GM12878 (cell line): ENCODE measurements at regions of chr12 and their contacts with region 1.

Region 1: DNA sequence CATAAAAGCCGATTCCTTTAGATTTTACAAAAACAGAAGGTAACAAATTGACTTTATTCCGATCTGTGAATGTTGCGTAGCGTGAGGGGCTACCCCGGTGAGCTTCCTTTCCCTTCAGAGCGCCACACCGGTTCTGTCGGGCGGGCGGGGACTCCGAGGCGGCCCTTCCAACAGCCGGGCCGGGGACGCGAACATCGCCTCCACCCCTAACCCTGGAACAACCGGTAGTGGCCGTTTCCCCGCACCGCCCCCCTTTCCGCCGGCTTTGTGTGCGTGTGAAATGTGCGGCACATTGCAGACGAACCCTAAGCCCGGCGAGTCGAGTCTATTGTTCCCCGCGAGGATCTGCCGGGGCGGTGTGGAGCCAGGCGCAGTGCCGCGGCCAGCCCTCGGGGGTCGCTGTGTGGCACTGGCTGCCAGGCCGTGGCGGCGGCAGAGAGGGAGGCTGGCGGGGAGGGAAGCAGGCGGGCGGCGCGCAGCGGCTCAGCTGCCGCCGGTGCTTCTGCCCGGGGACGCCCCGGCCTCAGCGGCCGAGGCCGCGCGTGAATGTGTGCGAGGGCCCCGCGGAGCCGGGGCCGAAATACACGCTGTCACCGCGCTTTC is 775 bp upstream of the ARID2 start:
- DNase-seq: peak; percentile 87
- ATAC-seq: peak; percentile 73
- H3K4me3 ChIP-seq: peak overlapping the region; percentile 93
- H3K27ac ChIP-seq: peak overlapping the region; percentile 95
- H3K4me1 ChIP-seq: no peaks in the 10 kb centered on the region
- H3K27me3 ChIP-seq: no peaks in the 10 kb centered on the region
- CTCF ChIP-seq: peak; percentile 94 to 98 (median 96)
- EP300 ChIP-seq: peak; percentile 36 to 45; a peak in 1 of 4 replicates
- POLR2A ChIP-seq: peak; percentile 96
- RAD21 ChIP-seq: peak; percentile 64

Region 2: DNA sequence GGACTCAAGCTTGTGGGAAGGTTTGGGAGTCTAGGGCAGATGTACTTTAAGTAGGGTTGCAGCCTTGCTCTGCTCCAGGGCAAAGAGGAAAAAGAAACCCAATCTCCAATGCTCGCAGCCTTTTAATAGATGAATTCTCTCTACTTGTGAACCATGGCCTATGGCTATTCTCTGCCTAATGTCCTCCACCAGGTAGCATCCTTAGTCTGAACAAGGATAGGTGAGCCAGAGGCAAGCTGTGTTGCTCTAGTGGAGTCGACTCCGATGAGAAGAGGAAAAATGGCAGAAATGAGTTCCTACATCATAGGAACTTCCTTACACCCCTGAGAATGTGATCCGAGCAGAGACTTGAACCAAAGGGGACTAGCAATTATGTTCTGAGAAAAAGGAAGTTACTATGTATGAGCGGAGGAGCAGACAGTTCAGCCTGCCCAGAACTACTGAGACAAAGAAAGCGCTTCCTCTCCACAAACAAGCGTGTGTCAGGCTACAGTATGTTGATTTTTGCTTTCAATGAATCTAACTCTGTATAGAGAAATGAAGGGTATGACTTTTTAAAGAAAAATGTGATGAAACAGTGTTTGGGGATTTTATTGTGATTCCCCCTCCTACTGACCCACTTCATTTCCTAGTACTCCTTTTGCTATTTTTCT is 152.8 kb before region 1 on chr12:
- CTCF ChIA-PET with region 1: interaction called, 4 read pairs
- POLR2A ChIA-PET with region 1: no interaction called
- RAD21 ChIA-PET with region 1: no interaction called
- SMC1A ChIA-PET with region 1: interaction called, 3 read pairs
- in situ Hi-C with region 1: no loop called
- intact Hi-C with region 1: loop called (anchors 10 kb)
- DNase-seq: peak; percentile 31
- ATAC-seq: peak; percentile 76
- H3K4me3 ChIP-seq: no peak overlapping the region
- H3K27ac ChIP-seq: peak overlapping the region; percentile 7; the same call in 1 of the 2 replicates
- H3K4me1 ChIP-seq: peaks cover 30% of the 10 kb centered on the region
- H3K27me3 ChIP-seq: no peaks in the 10 kb centered on the region
- CTCF ChIP-seq: no peak
- EP300 ChIP-seq: no peak
- POLR2A ChIP-seq: no peak
- RAD21 ChIP-seq: no peak